ENCODE measurements at regions of chr7 and their contacts with region 1.

Region 1: GRCh38 chr7:73622909-73623797 is 1.2 kb downstream of the MLXIPL start:
- DNase-seq: peak; percentile 75 to 88
- H3K4me3 ChIP-seq: peak overlapping the region; percentile 48 to 86 (median 74)
- H3K27ac ChIP-seq: no peak overlapping the region
- H3K4me1 ChIP-seq: peaks cover 0 to 7% (median 5%) of the 10 kb centered on the region in 4 experiments; a peak in 6 of 7 replicates
- H3K27me3 ChIP-seq: peaks cover 0 to 12% (median 10%) of the 10 kb centered on the region in 4 experiments; a peak in 5 of 7 replicates
- CTCF ChIP-seq: 0 out of 4 replicates have a peak, but pooled peaks of 1 of the 3 experiments have one; percentile 1
- EP300 ChIP-seq: no peak
- POLR2A ChIP-seq: no peak
- RAD21 ChIP-seq: no peak

Region 2: GRCh38 chr7:73533742-73534141 is 89.4 kb before region 1 on chr7:
- CTCF ChIA-PET with region 1: no interaction called
- POLR2A ChIA-PET with region 1: no interaction called
- DNase-seq: no peak
- H3K4me3 ChIP-seq: no peak overlapping the region
- H3K27ac ChIP-seq: no peak overlapping the region; the same call in 1 of the 2 replicates
- H3K4me1 ChIP-seq: no peaks in the 10 kb centered on the region
- H3K27me3 ChIP-seq: no peaks in the 10 kb centered on the region
- CTCF ChIP-seq: no peak
- EP300 ChIP-seq: no peak
- POLR2A ChIP-seq: no peak
- RAD21 ChIP-seq: no peak

Region 3: DNA sequence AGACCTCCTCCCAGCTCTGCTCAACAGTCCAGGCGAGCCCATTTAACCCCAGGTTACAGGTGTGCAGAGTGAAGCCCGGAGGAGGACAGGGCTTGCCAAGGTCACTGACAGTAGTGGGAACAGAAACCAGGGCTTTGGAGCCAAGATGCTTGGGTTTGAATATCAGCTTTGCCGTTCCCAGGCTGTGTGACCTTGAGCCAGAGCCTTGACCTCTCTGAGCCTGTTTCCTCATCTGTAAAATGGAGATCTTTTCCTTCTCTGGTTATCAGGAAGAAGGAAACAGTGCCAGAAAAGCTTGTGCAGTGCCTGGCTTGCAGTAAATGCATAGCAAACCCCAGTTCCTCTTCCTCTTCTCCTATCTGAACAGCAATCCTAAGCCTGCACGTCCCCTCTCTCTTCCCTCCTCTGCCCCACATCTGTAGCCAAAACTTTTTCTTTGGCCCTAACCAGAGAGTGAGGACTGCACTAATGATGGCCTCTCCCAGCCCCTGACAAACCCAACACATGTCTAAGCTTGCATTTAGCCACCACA is 22.6 kb after region 1 on chr7:
- CTCF ChIA-PET with region 1: interaction called, 86 read pairs
- POLR2A ChIA-PET with region 1: interaction called, 5 read pairs
- DNase-seq: no peak
- H3K4me3 ChIP-seq: no peak overlapping the region
- H3K27ac ChIP-seq: no peak overlapping the region
- H3K4me1 ChIP-seq: peaks cover 0 to 14% (median 7%) of the 10 kb centered on the region in 4 experiments; a peak in 6 of 7 replicates
- H3K27me3 ChIP-seq: peaks cover 0 to 30% (median 25%) of the 10 kb centered on the region in 4 experiments; a peak in 6 of 7 replicates
- CTCF ChIP-seq: no peak
- EP300 ChIP-seq: no peak
- POLR2A ChIP-seq: no peak
- RAD21 ChIP-seq: no peak